HEK293T (cell line): ENCODE measurements at regions of chr5 and their contacts with region 1.

Region 1: GRCh38 chr5:95646554-95647431 is at the start of gene RFESD:
- DNase-seq: peak; percentile 96

Region 2: DNA sequence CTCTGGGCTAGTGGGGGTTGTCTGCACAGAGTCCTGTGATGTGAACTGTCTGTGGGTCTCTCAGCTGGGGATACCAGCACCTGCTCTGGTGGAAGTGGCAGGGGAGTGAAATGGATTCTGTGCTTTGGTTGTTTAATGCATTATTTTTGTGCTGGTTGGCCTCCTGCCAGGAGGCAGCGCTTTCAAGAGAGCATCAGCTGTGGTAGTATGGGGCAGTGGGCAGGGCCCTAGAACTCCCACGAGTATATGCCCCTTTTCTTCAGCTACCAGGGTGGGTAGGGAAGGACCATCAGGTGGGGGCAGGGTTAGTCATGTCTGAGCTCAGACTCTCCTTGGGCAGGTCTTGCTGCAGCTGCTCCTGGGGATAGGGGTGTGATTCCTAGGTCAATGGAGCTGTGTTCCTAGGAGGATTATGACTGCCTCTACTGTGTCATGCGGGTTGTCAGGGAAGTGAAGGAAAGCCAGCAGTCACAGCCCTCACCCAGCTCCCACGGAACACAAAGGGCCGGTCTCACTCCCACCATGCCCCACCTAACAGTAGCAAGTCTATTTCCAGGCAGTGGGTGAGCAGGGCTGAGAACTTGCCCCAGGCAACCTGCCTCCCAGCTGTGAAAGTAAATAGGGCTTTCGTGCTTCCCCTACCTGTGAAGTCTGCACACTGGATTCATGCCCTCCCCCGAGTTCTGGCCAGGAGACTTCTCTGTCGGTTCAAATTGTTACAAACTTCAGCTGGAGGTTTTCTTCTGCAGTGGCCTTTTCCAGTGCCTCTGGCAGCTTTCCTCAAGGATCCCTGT is 281.3 kb before region 1 on chr5:
- CTCF ChIA-PET with region 1: no interaction called
- POLR2A ChIA-PET with region 1: no interaction called
- DNase-seq: no peak

Region 3: GRCh38 chr5:95835682-95836385 is 189.0 kb after region 1 on chr5:
- CTCF ChIA-PET with region 1: interaction called, 3 read pairs
- POLR2A ChIA-PET with region 1: interaction called, 10 read pairs
- DNase-seq: no peak

Region 4: DNA sequence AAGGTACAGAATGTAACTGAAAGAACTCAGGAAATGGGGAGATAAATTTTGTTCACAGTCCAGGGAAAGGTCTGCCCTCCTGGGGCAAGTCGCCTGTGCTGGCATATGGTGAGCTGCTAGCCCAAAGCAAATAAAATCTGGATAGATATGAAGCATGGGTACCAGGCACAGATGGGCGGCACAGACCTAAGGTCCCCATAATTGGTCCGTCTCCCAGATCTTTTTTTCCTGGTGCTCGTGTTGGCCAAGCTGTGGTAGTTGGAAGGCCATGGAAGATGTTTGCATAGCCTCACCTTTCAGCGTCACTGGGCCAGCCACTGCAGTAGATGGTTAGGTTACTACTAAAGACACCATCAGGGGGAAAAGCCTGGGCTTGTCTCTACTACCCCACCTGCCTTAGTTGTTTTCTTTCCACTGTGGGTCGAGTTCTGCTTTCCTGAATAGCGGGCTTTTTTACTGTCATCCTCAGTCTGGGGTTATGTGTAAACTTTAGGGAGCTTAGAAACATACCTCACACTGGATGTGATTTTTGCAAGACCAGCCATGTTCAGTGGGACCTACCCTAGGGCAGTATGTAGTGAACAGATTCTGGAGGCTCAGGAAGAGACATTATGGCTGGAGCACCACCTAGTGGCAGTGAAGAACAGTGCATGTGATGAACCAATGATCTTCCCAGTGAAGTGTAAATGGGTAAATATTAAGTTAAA is 199.9 kb after region 1 on chr5:
- CTCF ChIA-PET with region 1: interaction called, 8 read pairs
- POLR2A ChIA-PET with region 1: interaction called, 10 read pairs
- DNase-seq: peak; percentile 77